Psoas muscle (tissue), 8 donors: ENCODE measurements at regions of chr11 and their contacts with region 1.

Region 1: GRCh38 chr11:34599406-34599901 is 21.4 kb upstream of the EHF start:
- DNase-seq: no peak
- ATAC-seq: peak in 2 of 4 donors; percentile 21 to 41
- H3K4me3 ChIP-seq: no peak overlapping the region
- H3K27ac ChIP-seq: no peak overlapping the region
- H3K4me1 ChIP-seq: no peaks in the 10 kb centered on the region
- H3K27me3 ChIP-seq: no peaks in the 10 kb centered on the region
- CTCF ChIP-seq: no peak

Region 2: GRCh38 chr11:34640050-34640923 is 40.8 kb after region 1 on chr11:
- intact Hi-C with region 1: loop called (anchors 5 kb)
- DNase-seq: no peak
- ATAC-seq: no peak
- H3K4me3 ChIP-seq: no peak overlapping the region
- H3K27ac ChIP-seq: no peak overlapping the region
- H3K4me1 ChIP-seq: no peaks in the 10 kb centered on the region
- H3K27me3 ChIP-seq: no peaks in the 10 kb centered on the region
- CTCF ChIP-seq: no peak